CD14-positive monocyte (primary cell): ENCODE measurements at regions of chr9 and their contacts with region 1.

Region 1: DNA sequence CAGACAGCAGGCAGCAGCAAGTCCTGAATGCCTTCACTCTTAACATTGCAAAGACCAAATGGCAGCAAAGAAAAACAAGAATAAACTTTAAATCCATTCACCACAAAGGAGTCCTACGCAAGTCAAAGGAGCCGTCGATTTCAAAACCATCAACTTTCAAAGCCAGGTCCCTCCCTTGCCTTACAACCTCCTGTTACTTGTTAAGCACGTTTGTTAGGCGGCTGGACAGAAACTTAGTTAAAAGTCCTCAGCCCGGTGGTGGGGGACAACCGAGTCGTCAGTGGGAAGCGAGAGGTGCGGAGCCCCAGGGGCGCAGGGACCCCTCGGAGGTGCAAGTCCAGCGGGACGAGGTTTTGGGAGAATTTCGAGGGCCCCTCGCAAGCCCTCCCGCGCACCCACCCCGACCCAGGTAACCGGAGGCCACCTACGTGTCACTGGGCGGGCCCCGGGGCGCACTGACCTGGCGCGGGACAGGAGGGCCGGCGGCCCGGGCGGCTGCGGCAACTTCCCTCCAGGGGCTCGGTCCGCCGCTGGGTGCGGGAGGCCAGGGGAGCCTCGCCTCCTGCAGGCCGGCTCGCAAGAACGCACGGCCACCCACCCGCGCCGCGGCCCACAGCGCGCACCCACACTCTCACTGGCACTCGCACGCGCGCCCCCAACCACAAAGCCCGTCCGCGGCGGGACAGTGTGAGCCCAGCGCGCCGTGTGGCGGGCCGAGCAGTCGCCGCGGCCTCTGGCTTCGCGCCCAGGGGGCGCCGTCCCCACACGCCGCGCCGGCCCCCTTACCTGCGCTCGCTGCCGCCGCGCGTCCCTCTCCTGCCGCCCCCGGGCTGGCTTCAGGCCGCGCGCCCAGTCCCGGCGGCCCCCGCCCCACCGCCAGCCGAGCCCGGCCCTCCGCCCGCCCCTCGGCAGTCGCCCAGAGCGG is 627 bp downstream of the LPAR1 start:
- DNase-seq: peak; percentile 38 to 53 (median 51)
- H3K4me3 ChIP-seq: peak overlapping the region; percentile 74 to 80 (median 75)
- H3K4me3 Mint-ChIP-seq: peak overlapping the region; percentile 87 to 98
- H3K27ac ChIP-seq: peak overlapping the region; percentile 33 to 74
- H3K27ac Mint-ChIP-seq: peak overlapping the region; percentile 66 to 93 (median 81)
- H3K4me1 ChIP-seq: peaks cover 39 to 56% of the 10 kb centered on the region in 2 donors
- H3K4me1 Mint-ChIP-seq: peaks cover 46% of the 10 kb centered on the region
- H3K27me3 ChIP-seq: peaks cover 0 to 19% of the 10 kb centered on the region in 2 donors
- H3K27me3 Mint-ChIP-seq: peaks cover 18 to 43% (median 28%) of the 10 kb centered on the region in 3 donors
- CTCF ChIP-seq: peak; percentile 66

Region 2: GRCh38 chr9:111078391-111079038 is 40.9 kb after region 1 on chr9:
- intact Hi-C with region 1: loop called (anchors 5 kb)
- DNase-seq: peak; percentile 85 to 95 (median 87)
- H3K4me3 ChIP-seq: no peak overlapping the region
- H3K4me3 Mint-ChIP-seq: peak overlapping the region in 1 of 2 donors; percentile 66
- H3K27ac ChIP-seq: peak overlapping the region; percentile 91 to 93
- H3K27ac Mint-ChIP-seq: peak overlapping the region; percentile 94 to 99 (median 97)
- H3K4me1 ChIP-seq: peaks cover 50 to 52% of the 10 kb centered on the region in 2 donors
- H3K4me1 Mint-ChIP-seq: peaks cover 42% of the 10 kb centered on the region
- H3K27me3 ChIP-seq: no peaks in the 10 kb centered on the region
- H3K27me3 Mint-ChIP-seq: peaks cover 0 to 3% (median 0%) of the 10 kb centered on the region in 3 donors
- CTCF ChIP-seq: no peak

Region 3: GRCh38 chr9:111108946-111109345 is 71.3 kb after region 1 on chr9:
- intact Hi-C with region 1: loop called in 1 of 2 experiments (anchors 10 kb)
- DNase-seq: peak; percentile 76 to 83 (median 79)
- H3K4me3 ChIP-seq: no peak overlapping the region
- H3K4me3 Mint-ChIP-seq: no peak overlapping the region
- H3K27ac ChIP-seq: peak overlapping the region; percentile 24 to 63
- H3K27ac Mint-ChIP-seq: peak overlapping the region; percentile 34 to 85 (median 72)
- H3K4me1 ChIP-seq: peaks cover 18 to 24% of the 10 kb centered on the region in 2 donors
- H3K4me1 Mint-ChIP-seq: peaks cover 24% of the 10 kb centered on the region
- H3K27me3 ChIP-seq: no peaks in the 10 kb centered on the region
- H3K27me3 Mint-ChIP-seq: no peaks in the 10 kb centered on the region
- CTCF ChIP-seq: no peak

Region 4: GRCh38 chr9:111149016-111149759 is 111.5 kb after region 1 on chr9:
- intact Hi-C with region 1: loop called in 1 of 2 experiments (anchors 10 kb)
- DNase-seq: peak in 1 of 3 donors; percentile 19
- H3K4me3 ChIP-seq: peak overlapping the region in 1 of 3 experiments; percentile 41
- H3K4me3 Mint-ChIP-seq: peak overlapping the region in 1 of 2 donors; percentile 64
- H3K27ac ChIP-seq: peak overlapping the region; percentile 56 to 78
- H3K27ac Mint-ChIP-seq: peak overlapping the region; percentile 59 to 90 (median 81)
- H3K4me1 ChIP-seq: peaks cover 23 to 35% of the 10 kb centered on the region in 2 donors
- H3K4me1 Mint-ChIP-seq: peaks cover 41% of the 10 kb centered on the region
- H3K27me3 ChIP-seq: no peaks in the 10 kb centered on the region
- H3K27me3 Mint-ChIP-seq: no peaks in the 10 kb centered on the region
- CTCF ChIP-seq: no peak

Region 5: DNA sequence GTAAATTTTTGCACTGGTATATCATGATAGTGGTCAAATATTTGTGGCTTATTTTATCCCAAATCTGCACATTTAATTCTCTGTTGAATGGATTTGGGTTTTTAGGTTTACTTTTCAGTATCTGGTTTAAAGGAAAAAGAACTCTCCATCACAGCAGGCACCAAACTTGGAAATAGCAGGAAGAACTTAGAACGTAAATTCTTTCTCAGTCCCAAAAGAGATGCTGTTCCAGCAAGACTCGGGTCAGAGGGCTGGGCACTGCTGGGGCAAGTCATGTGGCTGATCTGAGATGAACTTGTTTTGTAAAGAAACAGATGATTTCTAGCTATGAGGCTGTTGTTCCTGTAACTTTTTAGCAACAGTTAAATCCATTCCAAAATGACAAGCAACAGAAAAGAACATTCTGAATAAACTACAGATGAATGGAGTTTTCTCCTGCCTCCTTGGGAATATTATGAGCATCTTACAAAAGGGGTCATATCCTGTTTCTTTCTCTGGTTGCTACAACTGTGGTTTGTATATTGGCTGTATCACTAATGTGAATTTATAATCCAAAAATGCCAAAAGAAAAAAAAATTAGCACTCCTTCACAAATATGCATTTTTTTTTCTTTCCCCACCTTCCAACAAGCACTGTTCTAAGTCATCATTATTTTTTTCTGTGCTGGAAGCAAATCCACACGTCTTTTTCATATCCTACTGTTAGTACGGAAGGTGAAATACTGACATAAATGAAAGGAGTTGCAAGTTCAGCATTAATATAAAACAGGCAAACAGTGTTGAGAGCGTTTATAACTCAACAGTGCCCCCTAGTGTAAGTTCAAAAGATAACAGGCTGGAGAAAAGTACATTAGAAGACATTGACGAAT is 261.3 kb after region 1 on chr9:
- intact Hi-C with region 1: loop called (anchors 5 kb)
- DNase-seq: peak; percentile 49 to 62 (median 54)
- H3K4me3 ChIP-seq: no peak overlapping the region
- H3K4me3 Mint-ChIP-seq: peak overlapping the region in 1 of 2 donors; percentile 63
- H3K27ac ChIP-seq: no peak overlapping the region
- H3K27ac Mint-ChIP-seq: peak overlapping the region in 1 of 7 donors; percentile 41
- H3K4me1 ChIP-seq: peaks cover 0 to 6% of the 10 kb centered on the region in 2 donors
- H3K4me1 Mint-ChIP-seq: peaks cover 11% of the 10 kb centered on the region
- H3K27me3 ChIP-seq: peaks cover 0 to 5% of the 10 kb centered on the region in 2 donors
- H3K27me3 Mint-ChIP-seq: peaks cover 0 to 4% (median under 1%) of the 10 kb centered on the region in 3 donors
- CTCF ChIP-seq: peak; percentile 86